Activated B cell treated with CpG ODN at 0.5 μM for 24 hours (primary cell): ENCODE measurements at regions of chr17 and their contacts with region 1.

Region 1: DNA sequence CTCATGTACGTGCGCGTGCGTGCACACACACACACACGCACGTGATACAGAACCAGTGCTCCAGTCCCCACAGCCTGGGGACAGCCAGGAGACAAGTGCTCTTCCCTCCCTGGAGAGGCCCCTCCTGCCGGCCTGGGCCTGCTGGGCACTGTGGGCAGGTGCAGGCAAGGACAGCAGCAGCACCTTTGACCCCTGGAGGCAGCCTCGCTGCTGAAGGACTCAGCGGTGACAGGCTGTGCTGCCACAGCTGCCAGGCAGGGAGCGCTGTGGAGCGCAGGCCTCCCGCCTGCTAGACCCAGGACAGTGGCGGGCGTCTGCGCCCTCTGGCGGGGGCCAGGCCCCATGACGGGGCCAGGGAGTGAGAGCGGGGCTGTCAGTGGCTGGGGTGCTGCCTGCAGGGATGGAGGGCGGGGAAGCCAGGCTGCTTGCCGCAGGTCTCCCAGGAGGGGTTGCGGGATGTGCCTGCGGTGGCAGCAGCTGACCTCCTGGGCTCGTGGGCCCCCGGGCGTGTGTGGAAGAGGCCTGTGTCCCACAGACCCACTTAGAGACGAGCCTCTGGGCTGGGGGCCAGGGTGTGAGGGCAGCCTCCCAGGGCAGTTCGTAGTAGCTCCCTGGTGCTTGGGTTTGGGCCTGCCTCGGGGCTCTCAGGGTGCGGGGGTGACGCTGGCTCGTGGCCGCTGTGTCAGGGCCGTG is 63.5 kb upstream of the PVALEF start:
- DNase-seq: peak; percentile 84
- ATAC-seq: peak; percentile 100
- H3K4me3 Mint-ChIP-seq: no peak overlapping the region
- H3K27ac Mint-ChIP-seq: no peak overlapping the region
- H3K4me1 Mint-ChIP-seq: peaks cover 3% of the 10 kb centered on the region
- H3K27me3 Mint-ChIP-seq: peaks cover 10% of the 10 kb centered on the region
- CTCF ChIP-seq: peak; percentile 91

Region 2: GRCh38 chr17:81018044-81018802 is 83.5 kb before region 1 on chr17:
- CTCF ChIA-PET with region 1: interaction called, 12 read pairs
- POLR2A ChIA-PET with region 1: interaction called, 4 read pairs
- intact Hi-C with region 1: loop called (anchors 1 kb)
- DNase-seq: no peak
- ATAC-seq: peak; percentile 76
- H3K4me3 Mint-ChIP-seq: peak overlapping the region; percentile 82
- H3K27ac Mint-ChIP-seq: peak overlapping the region; percentile 64
- H3K4me1 Mint-ChIP-seq: peaks cover 14% of the 10 kb centered on the region
- H3K27me3 Mint-ChIP-seq: no peaks in the 10 kb centered on the region
- CTCF ChIP-seq: no peak

Region 3: GRCh38 chr17:81083125-81083765 is 18.5 kb before region 1 on chr17:
- CTCF ChIA-PET with region 1: no interaction called
- POLR2A ChIA-PET with region 1: no interaction called
- intact Hi-C with region 1: no loop called
- DNase-seq: no peak
- ATAC-seq: no peak
- H3K4me3 Mint-ChIP-seq: no peak overlapping the region
- H3K27ac Mint-ChIP-seq: no peak overlapping the region
- H3K4me1 Mint-ChIP-seq: no peaks in the 10 kb centered on the region
- H3K27me3 Mint-ChIP-seq: peaks cover 7% of the 10 kb centered on the region
- CTCF ChIP-seq: no peak

Region 4: DNA sequence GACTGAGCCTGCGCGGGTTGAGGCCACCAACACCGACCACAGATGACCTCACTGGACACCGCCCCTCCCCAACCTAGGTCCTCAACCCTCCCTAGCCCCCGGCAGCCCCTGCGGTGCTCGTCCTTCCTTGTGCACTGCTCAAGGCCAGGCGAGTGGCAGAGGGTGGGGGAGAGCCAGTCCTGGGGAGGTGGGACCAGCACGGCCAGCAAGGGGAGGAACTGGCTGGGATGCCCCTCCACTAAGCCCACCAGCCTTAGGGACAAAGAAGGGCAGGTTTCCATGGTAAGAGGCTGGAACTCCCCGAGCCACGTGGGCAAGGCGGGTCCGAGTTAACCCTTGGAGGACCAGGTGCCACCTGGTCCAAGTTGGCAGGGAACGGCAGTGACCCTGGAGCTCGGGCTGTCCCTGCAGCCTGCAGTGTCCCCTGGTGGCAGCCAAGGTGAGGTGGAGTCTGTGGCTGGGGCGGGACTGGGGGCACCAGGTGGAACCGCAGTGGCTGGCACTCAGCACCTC is 435.6 kb after region 1 on chr17:
- CTCF ChIA-PET with region 1: no interaction called
- POLR2A ChIA-PET with region 1: no interaction called
- intact Hi-C with region 1: loop called (anchors 2 kb)
- DNase-seq: peak; percentile 45
- ATAC-seq: peak; percentile 81
- H3K4me3 Mint-ChIP-seq: no peak overlapping the region
- H3K27ac Mint-ChIP-seq: no peak overlapping the region
- H3K4me1 Mint-ChIP-seq: peaks cover 23% of the 10 kb centered on the region
- H3K27me3 Mint-ChIP-seq: peaks cover 4% of the 10 kb centered on the region
- CTCF ChIP-seq: no peak

Region 5: GRCh38 chr17:82687375-82687861 is 1585.7 kb after region 1 on chr17:
- CTCF ChIA-PET with region 1: no interaction called
- POLR2A ChIA-PET with region 1: no interaction called
- intact Hi-C with region 1: no loop called
- DNase-seq: no peak
- ATAC-seq: no peak
- H3K4me3 Mint-ChIP-seq: no peak overlapping the region
- H3K27ac Mint-ChIP-seq: no peak overlapping the region
- H3K4me1 Mint-ChIP-seq: no peaks in the 10 kb centered on the region
- H3K27me3 Mint-ChIP-seq: no peaks in the 10 kb centered on the region
- CTCF ChIP-seq: no peak